Activated CD4-positive, alpha-beta T cell treated with anti-CD3 and anti-CD28 coated beads for 36 hours (primary cell): ENCODE measurements at regions of chr2 and their contacts with region 1.

Region 1: DNA sequence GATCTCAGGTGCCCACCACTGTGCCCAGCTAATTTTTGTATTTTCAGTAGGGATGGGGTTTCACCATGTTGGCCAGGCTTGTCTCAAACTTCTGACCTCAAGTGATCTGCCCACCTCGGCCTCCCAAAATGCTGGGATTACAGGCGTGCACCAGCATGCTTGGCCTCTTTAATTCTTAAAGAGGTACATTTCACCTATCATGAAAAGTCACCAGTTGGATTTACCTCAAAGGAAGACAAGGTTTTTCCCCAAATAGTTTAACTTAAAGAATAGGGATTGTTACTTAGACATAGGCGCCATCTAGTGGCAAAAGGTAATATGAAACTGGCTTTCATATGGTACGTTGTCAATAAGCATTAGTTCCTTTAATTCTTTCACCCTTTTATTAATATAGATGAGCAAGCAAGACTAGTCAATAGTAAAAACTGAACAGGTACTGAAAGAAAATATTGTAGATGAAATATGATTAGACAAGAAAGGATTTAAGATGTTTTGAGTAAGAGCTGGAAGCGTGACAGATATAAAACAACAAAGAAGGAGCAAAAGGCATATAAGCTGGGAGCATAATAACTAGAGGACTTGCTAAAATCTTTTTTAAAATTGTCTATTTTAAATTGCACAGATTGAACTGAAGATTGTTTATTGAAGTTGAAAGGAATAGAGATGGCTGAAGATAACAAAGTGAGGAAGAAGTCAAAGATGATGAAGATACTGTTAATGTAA is 35.0 kb upstream of the PSMD14 start:
- DNase-seq: no peak
- ATAC-seq: peak; percentile 61
- H3K4me3 Mint-ChIP-seq: no peak overlapping the region
- H3K27ac Mint-ChIP-seq: no peak overlapping the region
- H3K4me1 Mint-ChIP-seq: no peaks in the 10 kb centered on the region
- H3K27me3 Mint-ChIP-seq: peaks cover 4% of the 10 kb centered on the region

Region 2: DNA sequence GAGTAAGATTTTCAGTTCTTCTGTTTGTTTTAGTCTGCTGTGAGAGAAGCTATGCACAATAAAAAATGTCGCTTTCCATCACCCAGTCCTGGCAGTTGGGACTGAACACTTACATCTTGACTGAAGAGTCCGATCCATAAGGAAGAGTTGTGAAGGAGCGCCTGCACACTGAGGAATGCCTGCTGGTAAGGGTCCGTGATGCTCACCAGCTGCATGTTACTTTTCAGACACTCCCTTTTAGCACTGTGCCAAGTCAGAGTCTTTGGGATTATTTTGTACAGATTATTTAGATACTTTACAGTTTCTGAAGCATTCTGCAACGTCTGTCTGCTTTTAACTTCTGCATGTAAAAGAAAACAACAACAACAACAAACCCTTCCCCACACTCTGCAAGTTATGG is 1432.6 kb before region 1 on chr2:
- CTCF ChIA-PET with region 1: no interaction called
- POLR2A ChIA-PET with region 1: no interaction called
- intact Hi-C with region 1: no loop called
- DNase-seq: no peak
- ATAC-seq: no peak
- H3K4me3 Mint-ChIP-seq: no peak overlapping the region
- H3K27ac Mint-ChIP-seq: no peak overlapping the region
- H3K4me1 Mint-ChIP-seq: no peaks in the 10 kb centered on the region
- H3K27me3 Mint-ChIP-seq: no peaks in the 10 kb centered on the region

Region 3: DNA sequence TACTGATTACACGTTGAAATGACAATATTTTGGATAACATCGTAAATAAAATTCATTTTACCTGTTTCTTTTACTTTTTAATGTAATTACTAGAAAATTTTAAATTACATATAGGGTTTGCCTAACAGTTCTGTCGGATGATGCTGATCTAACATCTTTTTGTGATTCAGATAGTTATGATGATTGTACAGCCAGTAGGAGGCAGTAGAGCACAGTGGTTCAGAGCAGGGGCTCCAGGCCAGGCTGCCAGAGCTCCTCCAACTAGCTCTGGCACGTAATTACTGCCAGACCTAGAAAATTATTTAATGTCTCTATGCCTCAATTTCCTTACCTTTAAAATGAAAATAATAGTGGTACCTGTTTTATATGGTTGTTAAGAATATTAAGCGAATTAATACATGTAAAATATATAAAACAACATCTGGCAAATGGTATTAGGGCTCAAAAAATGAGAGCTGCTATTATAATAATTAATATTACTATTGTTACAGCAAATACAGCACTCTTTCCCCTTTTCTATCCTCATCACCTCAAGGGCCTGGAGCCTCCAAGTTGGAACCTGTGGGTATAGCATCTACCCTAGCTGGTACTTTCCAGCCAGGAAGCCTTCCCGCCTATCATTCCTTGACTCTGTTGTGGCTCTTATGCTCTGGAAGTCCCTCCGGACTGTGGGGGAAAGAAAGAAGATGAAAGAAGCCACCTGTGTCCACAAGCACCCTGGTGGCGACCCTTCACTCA is 1163.1 kb before region 1 on chr2:
- CTCF ChIA-PET with region 1: interaction called, 7 read pairs
- POLR2A ChIA-PET with region 1: no interaction called
- intact Hi-C with region 1: loop called in 1 of 2 experiments (anchors 10 kb)
- DNase-seq: peak; percentile 74
- ATAC-seq: peak; percentile 82
- H3K4me3 Mint-ChIP-seq: no peak overlapping the region
- H3K27ac Mint-ChIP-seq: no peak overlapping the region
- H3K4me1 Mint-ChIP-seq: no peaks in the 10 kb centered on the region
- H3K27me3 Mint-ChIP-seq: peaks cover 4% of the 10 kb centered on the region

Region 4: DNA sequence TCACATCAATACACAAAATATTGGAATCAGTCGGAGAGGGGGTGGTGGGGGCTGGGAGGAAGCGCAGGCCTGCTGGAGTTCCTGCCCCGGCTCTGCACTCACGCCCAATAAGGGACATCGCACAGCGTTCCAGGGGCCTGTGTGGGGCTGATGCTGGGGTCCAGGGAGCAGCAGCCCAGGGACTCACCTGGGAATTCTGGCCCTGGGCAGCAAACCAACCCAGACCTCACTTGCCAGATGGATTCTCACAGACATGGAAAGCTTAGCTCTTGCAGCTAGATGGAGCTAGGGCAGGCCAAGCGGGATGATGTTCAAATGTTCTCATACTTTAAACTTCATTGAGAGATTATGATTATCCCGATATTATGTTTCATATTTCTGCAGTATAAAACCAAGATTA is 379.6 kb before region 1 on chr2:
- CTCF ChIA-PET with region 1: no interaction called
- POLR2A ChIA-PET with region 1: no interaction called
- intact Hi-C with region 1: no loop called
- DNase-seq: no peak
- ATAC-seq: no peak
- H3K4me3 Mint-ChIP-seq: no peak overlapping the region
- H3K27ac Mint-ChIP-seq: no peak overlapping the region
- H3K4me1 Mint-ChIP-seq: no peaks in the 10 kb centered on the region
- H3K27me3 Mint-ChIP-seq: no peaks in the 10 kb centered on the region

Region 5: DNA sequence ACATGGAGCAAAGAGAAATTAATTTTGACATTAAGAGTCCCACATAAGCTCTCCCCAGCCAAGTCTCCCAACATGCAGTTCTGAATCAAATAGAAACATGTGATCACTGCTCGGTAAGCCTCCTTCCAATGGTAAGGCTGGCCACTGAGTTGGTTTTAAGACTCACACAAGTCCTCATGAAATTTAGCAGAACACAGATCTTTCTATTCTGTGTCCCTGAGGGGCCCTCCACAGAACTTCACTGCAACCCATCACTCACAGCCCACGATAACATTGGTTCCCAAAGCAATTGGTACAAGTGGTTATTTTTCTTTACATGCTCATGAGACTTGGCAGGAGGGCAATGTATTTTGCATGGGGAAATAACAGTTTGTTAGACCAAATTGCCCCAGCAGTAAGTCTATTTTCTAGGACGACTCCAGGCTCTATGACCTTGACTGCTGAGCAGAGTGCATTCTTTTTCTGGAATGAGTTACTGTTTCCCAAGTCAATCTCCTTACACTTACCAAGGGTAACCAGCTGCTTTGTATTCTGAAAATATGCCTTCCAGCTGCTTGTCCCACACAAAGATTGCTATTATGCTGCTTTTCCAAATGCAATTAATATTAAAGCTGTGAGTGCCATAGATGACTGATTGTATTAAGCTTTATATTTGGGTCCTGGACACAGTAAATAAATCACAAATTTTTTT is 255.3 kb before region 1 on chr2:
- CTCF ChIA-PET with region 1: no interaction called
- POLR2A ChIA-PET with region 1: no interaction called
- intact Hi-C with region 1: loop called in 1 of 2 experiments (anchors 5 kb)
- DNase-seq: no peak
- ATAC-seq: no peak
- H3K4me3 Mint-ChIP-seq: no peak overlapping the region
- H3K27ac Mint-ChIP-seq: no peak overlapping the region
- H3K4me1 Mint-ChIP-seq: no peaks in the 10 kb centered on the region
- H3K27me3 Mint-ChIP-seq: peaks cover 3% of the 10 kb centered on the region

Region 6: DNA sequence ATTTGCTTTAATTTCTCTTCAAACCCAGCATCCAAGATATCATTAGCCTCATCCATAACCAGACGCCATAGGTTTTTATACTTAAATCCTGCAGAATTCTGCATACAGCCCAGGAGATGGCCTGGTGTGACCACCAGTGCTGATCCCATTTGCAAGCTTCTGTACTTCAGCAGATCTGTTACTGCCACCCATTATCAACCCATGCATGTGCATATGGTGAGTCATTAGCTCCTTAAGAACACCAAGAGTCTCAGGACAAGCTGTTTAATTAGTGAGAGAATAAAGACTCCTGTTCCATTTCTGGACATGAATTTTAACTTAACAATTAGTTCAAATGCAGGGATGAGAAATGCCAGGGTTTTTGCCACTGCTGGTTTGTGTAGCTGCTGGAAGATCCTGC is 223.6 kb before region 1 on chr2:
- CTCF ChIA-PET with region 1: no interaction called
- POLR2A ChIA-PET with region 1: no interaction called
- intact Hi-C with region 1: no loop called
- DNase-seq: no peak
- ATAC-seq: no peak
- H3K4me3 Mint-ChIP-seq: no peak overlapping the region
- H3K27ac Mint-ChIP-seq: no peak overlapping the region
- H3K4me1 Mint-ChIP-seq: no peaks in the 10 kb centered on the region
- H3K27me3 Mint-ChIP-seq: peaks cover 27% of the 10 kb centered on the region

Region 7: DNA sequence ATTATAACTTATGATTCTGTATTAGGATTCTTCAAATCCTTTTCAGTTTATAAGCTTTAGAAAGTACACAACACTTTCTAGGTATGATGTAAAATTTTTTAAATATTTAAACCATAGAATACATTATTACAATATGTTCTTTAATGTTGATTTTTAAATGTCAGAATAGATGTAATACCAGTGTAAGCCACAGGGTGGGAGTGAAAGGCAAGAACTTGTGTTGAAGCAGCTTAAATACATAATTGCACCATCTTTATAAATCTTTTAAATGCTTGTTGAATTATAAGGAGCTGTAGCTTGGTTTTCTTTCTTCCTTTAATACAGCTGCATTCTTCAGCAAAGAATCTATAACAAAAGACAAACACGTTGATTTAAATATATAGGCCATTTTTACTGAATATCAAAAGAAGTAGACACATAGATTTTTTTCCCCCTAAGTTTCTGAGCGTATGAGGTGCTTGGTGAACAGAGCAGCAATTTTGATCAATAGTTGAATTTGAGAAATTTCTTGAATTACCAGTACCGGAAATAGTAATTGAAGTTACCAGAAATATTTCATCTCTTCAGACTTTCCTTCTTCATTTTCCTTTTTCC is 50.0 kb before region 1 on chr2:
- CTCF ChIA-PET with region 1: interaction called, 81 read pairs
- POLR2A ChIA-PET with region 1: no interaction called
- intact Hi-C with region 1: loop called (anchors 1 kb)
- DNase-seq: no peak
- ATAC-seq: peak; percentile 44
- H3K4me3 Mint-ChIP-seq: no peak overlapping the region
- H3K27ac Mint-ChIP-seq: no peak overlapping the region
- H3K4me1 Mint-ChIP-seq: no peaks in the 10 kb centered on the region
- H3K27me3 Mint-ChIP-seq: no peaks in the 10 kb centered on the region

Region 8: DNA sequence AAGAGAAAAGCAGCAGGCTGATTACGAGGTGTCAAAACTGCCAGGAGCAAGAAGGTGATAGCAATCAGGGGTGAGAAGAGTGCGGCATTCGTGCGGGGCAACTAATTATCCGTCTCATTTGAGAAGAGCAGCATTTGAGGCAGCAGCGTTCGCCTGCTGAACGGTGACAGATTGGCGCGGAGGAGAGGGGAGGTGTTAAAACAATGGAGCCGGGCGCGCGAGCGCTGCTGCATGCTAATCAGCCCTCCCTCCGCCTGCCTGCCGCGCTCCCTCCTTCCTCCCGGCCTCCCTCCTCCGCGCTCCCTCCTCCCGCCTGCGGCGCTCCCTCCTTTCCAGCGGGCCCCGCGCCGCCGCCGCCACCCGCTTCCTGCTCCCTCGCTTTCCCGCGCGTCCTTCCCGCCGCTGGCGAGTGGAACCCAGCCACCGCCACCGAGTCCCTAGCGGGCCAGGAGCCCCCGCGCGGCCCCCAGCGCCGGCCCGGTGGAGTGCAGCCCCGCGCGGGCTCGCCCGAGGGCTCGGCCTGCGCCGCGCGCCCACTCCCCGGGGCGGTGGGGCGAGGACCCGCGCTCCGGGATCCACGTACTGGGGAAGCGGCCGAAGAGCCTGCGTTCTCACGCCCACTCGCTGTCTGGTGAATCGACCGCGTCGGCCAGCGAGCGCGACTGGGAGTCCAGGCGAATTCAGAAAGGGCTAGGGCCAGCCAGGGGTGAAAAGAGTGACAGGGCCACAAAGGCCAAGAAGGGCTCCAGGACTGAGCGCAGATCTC is 34.5 kb before region 1 on chr2:
- CTCF ChIA-PET with region 1: interaction called, 23 read pairs
- POLR2A ChIA-PET with region 1: interaction called, 3 read pairs
- intact Hi-C with region 1: no loop called
- DNase-seq: peak; percentile 79
- ATAC-seq: peak; percentile 55
- H3K4me3 Mint-ChIP-seq: peak overlapping the region; percentile 76
- H3K27ac Mint-ChIP-seq: peak overlapping the region; percentile 81
- H3K4me1 Mint-ChIP-seq: peaks cover 54% of the 10 kb centered on the region
- H3K27me3 Mint-ChIP-seq: no peaks in the 10 kb centered on the region

Region 9: DNA sequence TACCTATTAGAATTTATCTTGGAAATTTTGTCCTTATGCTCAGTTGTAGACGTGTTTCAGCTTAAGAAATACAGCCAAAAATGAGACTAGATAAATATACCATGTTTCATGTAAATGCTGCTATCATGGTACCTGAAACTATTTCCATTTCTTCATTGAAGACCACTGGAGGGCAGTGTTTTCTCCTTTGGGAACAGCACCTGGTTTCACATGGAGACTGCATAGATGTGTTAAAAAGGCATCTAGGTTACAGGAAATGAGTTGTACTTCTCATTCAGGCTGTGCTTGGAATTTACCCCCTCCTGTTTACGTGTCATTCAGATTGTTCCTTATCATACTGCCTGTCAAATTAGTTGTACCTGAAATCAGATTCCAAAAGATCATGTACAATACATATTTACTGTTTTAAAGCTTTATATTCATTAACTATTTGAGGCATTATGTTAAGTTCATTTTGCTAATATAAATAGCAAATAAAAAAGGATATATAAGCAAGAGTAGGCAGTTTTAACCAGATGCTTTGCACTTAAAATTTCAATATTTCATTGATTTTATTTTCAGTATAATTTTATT is 22.2 kb before region 1 on chr2:
- CTCF ChIA-PET with region 1: interaction called, 12 read pairs
- POLR2A ChIA-PET with region 1: no interaction called
- intact Hi-C with region 1: loop called in 1 of 2 experiments (anchors 2 kb)
- DNase-seq: no peak
- ATAC-seq: peak; percentile 69
- H3K4me3 Mint-ChIP-seq: no peak overlapping the region
- H3K27ac Mint-ChIP-seq: no peak overlapping the region
- H3K4me1 Mint-ChIP-seq: peaks cover 19% of the 10 kb centered on the region
- H3K27me3 Mint-ChIP-seq: no peaks in the 10 kb centered on the region

Region 10: DNA sequence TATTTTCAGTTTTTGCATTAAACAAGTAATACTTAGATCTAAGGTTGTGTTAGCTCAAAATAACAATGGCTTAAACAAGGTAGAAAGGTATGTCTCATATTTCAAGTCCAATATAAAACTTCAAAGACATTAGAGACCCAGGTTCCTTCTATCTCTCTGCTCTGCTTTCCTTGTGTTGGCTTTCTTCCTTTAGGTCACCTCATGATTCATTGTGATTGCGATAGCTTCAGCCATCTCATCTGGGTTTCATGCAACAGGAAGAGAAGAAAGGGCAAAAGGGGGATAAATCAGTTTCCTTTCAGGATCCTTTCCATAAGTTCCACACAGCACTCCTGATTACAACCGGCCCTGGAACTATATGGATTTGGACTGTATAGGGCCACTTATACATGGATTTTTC is 126.9 kb after region 1 on chr2:
- CTCF ChIA-PET with region 1: no interaction called
- POLR2A ChIA-PET with region 1: no interaction called
- intact Hi-C with region 1: no loop called
- DNase-seq: no peak
- ATAC-seq: no peak
- H3K4me3 Mint-ChIP-seq: no peak overlapping the region
- H3K27ac Mint-ChIP-seq: no peak overlapping the region
- H3K4me1 Mint-ChIP-seq: no peaks in the 10 kb centered on the region
- H3K27me3 Mint-ChIP-seq: no peaks in the 10 kb centered on the region